ENCODE measurements at regions of chr7 and their contacts with region 1.

Region 1: DNA sequence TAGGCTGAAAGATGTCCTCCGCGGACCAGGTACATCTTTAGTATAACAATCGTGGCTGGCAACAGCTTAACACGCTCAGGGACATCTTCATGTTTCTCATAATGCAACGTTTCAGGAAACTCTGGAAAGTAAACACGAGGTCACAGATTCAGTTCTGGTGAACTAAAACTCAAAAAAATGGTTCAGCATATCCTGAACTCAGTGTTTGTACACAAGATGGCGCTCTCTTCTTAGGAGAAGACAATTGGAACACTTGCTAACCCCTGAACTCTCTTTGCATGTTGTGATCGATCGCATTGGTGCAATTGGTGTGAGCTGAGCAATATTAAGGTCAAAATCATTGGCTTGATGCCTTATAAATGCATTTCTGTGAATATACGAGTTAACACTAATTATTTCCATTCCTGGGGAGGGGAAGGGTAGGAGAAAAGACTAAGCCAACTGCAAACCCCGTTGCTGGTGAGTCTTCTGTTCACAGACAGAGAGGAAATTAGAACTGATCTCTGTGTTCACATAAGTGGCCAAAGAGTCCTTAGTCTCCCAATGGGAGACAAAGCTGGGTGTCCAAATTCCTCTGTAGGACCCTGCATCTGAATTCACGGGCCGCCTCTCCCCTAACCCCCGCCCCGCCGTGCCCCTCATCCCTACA is 52.6 kb upstream of the FAM180A start:
- DNase-seq: peak; percentile 83
- H3K4me3 Mint-ChIP-seq: no peak overlapping the region
- H3K27ac Mint-ChIP-seq: no peak overlapping the region
- H3K4me1 Mint-ChIP-seq: peaks cover 2% of the 10 kb centered on the region
- H3K27me3 Mint-ChIP-seq: peaks cover 9% of the 10 kb centered on the region

Region 2: GRCh38 chr7:135771961-135772638 is 29.1 kb before region 1 on chr7:
- intact Hi-C with region 1: no loop called
- DNase-seq: no peak
- H3K4me3 Mint-ChIP-seq: no peak overlapping the region
- H3K27ac Mint-ChIP-seq: no peak overlapping the region
- H3K4me1 Mint-ChIP-seq: no peaks in the 10 kb centered on the region
- H3K27me3 Mint-ChIP-seq: no peaks in the 10 kb centered on the region

Region 3: GRCh38 chr7:135965602-135966001 is 164.4 kb after region 1 on chr7:
- intact Hi-C with region 1: no loop called
- DNase-seq: no peak
- H3K4me3 Mint-ChIP-seq: no peak overlapping the region
- H3K27ac Mint-ChIP-seq: no peak overlapping the region
- H3K4me1 Mint-ChIP-seq: peaks cover 38% of the 10 kb centered on the region
- H3K27me3 Mint-ChIP-seq: no peaks in the 10 kb centered on the region

Region 4: DNA sequence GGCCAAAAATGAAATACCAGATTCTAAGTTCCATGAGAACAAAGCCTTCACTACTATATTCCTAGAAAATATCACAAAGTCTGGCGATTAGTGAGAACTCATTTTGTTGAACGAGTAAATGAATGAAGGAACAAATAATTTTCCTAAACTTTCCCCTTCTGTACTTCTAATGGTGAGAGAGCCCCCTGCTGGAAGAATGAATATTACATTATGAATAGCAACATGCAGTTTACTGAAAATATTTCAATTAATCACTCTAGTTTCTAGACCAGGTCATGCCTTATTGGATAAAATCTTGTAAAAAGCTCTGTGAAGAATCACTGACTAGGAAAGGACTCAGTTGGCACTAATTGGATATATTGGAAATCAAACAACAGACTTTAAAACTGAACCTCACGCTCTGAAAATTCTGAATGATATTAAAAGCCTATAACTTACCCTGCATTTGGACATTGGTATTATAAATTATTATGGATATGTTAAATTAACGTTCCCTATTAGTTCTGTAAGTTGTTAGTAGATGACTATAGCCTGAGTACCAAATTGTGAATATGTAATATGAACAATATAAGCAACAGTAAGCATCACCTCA is 208.4 kb after region 1 on chr7:
- intact Hi-C with region 1: loop called (anchors 1 kb)
- DNase-seq: no peak
- H3K4me3 Mint-ChIP-seq: no peak overlapping the region
- H3K27ac Mint-ChIP-seq: no peak overlapping the region
- H3K4me1 Mint-ChIP-seq: peaks cover 4% of the 10 kb centered on the region
- H3K27me3 Mint-ChIP-seq: peaks cover 8% of the 10 kb centered on the region

Region 5: GRCh38 chr7:136405931-136406777 is 605.0 kb after region 1 on chr7:
- intact Hi-C with region 1: loop called (anchors 10 kb)
- DNase-seq: peak; percentile 70
- H3K4me3 Mint-ChIP-seq: no peak overlapping the region
- H3K27ac Mint-ChIP-seq: no peak overlapping the region
- H3K4me1 Mint-ChIP-seq: peaks cover 2% of the 10 kb centered on the region
- H3K27me3 Mint-ChIP-seq: no peaks in the 10 kb centered on the region

Region 6: GRCh38 chr7:137454246-137454724 is 1653.1 kb after region 1 on chr7:
- intact Hi-C with region 1: loop called (anchors 5 kb)
- DNase-seq: no peak
- H3K4me3 Mint-ChIP-seq: no peak overlapping the region
- H3K27ac Mint-ChIP-seq: no peak overlapping the region
- H3K4me1 Mint-ChIP-seq: no peaks in the 10 kb centered on the region
- H3K27me3 Mint-ChIP-seq: no peaks in the 10 kb centered on the region

Measured in activated CD4-positive, alpha-beta T cell treated with anti-CD3 and anti-CD28 coated beads, Interleukin-2, amount 10 ng/mL, durations not matched to agents 24 days and 14 days (primary cell).